ENCODE measurements at regions of chr10 and their contacts with region 1.

Region 1: GRCh38 chr10:122062831-122063674 is 74.1 kb downstream of the TACC2 start:
- DNase-seq: peak; percentile 83
- ATAC-seq: peak; percentile 97
- H3K4me3 ChIP-seq: no peak overlapping the region
- H3K27ac ChIP-seq: no peak overlapping the region
- H3K4me1 ChIP-seq: peaks cover 8% of the 10 kb centered on the region
- H3K27me3 ChIP-seq: no peaks in the 10 kb centered on the region
- CTCF ChIP-seq: no peak
- POLR2A ChIP-seq: no peak
- RAD21 ChIP-seq: no peak

Region 2: DNA sequence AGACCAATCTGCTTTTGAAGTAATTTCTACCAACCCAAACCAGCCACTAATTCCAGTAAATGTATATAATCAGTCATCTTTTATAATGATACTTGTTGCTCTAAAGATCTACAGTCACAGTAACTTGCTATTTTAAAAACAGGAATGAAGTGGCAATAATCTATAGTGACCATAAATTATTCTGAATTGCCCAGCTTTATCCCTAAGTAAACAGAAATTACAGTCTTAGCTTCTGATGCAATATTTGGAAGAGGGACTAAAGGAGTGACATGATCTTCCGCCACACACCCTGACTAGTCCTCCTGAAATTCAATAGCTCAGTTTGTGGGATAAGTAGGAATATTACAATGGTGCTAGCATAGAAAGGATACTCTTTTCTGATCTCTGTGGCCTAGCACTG is 231.3 kb before region 1 on chr10:
- CTCF ChIA-PET with region 1: no interaction called
- POLR2A ChIA-PET with region 1: no interaction called
- dilution Hi-C with region 1: no loop called
- in situ Hi-C with region 1: no loop called
- intact Hi-C with region 1: no loop called
- DNase-seq: peak; percentile 4
- ATAC-seq: peak; percentile 21; the same call in 1 of the 2 replicates
- H3K4me3 ChIP-seq: no peak overlapping the region
- H3K27ac ChIP-seq: no peak overlapping the region
- H3K4me1 ChIP-seq: no peaks in the 10 kb centered on the region
- H3K27me3 ChIP-seq: no peaks in the 10 kb centered on the region
- CTCF ChIP-seq: no peak
- POLR2A ChIP-seq: no peak
- RAD21 ChIP-seq: no peak

Region 3: DNA sequence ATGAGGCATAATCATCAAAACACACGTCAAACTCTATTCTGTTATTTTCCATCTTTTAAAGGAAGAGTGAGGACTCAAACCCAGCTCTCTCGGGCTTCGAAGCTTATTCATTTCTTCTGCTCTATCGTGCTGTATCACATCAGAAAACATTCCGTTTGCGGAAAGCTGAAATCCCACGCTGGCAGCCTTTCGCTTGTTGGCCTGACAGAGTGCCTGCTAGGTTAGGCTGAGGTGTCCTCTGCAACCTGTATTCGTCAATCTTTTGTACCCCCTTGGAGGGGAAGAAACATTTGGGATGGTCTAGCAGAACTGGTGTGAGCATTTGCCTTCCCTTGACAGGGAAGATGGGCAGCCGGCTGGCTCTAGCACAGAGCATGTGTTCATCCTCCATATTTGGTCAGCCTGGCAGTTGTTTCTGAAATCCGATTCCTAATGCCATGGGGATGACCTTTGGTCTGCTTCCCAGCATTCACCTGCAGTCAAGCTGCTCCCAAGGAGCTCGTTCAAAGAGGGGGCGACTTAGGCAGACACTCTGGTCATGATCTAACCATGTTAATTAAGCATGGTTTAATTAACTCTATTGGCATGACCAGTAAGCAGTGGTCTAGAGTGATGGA is 18.9 kb before region 1 on chr10:
- CTCF ChIA-PET with region 1: interaction called, 3 read pairs
- POLR2A ChIA-PET with region 1: interaction called, 17 read pairs
- dilution Hi-C with region 1: no loop called
- in situ Hi-C with region 1: no loop called
- intact Hi-C with region 1: no loop called
- DNase-seq: peak; percentile 49
- ATAC-seq: peak; percentile 79
- H3K4me3 ChIP-seq: no peak overlapping the region
- H3K27ac ChIP-seq: no peak overlapping the region
- H3K4me1 ChIP-seq: peaks cover 4% of the 10 kb centered on the region; the same call in 1 of the 2 replicates
- H3K27me3 ChIP-seq: peaks cover 14% of the 10 kb centered on the region
- CTCF ChIP-seq: no peak
- POLR2A ChIP-seq: no peak
- RAD21 ChIP-seq: no peak

Measured in IMR-90 (cell line).